CD4-positive, alpha-beta T cell (primary cell): ENCODE measurements at regions of chr20 and their contacts with region 1.

Region 1: GRCh38 chr20:29878281-29878741 is 1379.2 kb upstream of the DEFB115 start:
- DNase-seq: peak in 2 of 14 experiments; percentile 7 to 25
- ATAC-seq: no peak
- H3K4me3 ChIP-seq: no peak overlapping the region
- H3K4me3 Mint-ChIP-seq: peak overlapping the region; percentile 54
- H3K27ac ChIP-seq: no peak overlapping the region
- H3K27ac Mint-ChIP-seq: no peak overlapping the region
- H3K4me1 ChIP-seq: no peaks in the 10 kb centered on the region
- H3K4me1 Mint-ChIP-seq: no peaks in the 10 kb centered on the region
- H3K27me3 ChIP-seq: no peaks in the 10 kb centered on the region
- H3K27me3 Mint-ChIP-seq: no peaks in the 10 kb centered on the region
- CTCF ChIP-seq: no peak

Region 2: GRCh38 chr20:29119141-29119540 is 759.2 kb before region 1 on chr20:
- CTCF ChIA-PET with region 1: no interaction called
- POLR2A ChIA-PET with region 1: no interaction called
- intact Hi-C with region 1: loop called in 1 of 2 experiments (anchors 10 kb)
- DNase-seq: no peak
- ATAC-seq: no peak
- H3K4me3 ChIP-seq: no peak overlapping the region
- H3K4me3 Mint-ChIP-seq: no peak overlapping the region
- H3K27ac ChIP-seq: no peak overlapping the region
- H3K27ac Mint-ChIP-seq: no peak overlapping the region
- H3K4me1 ChIP-seq: no peaks in the 10 kb centered on the region
- H3K4me1 Mint-ChIP-seq: no peaks in the 10 kb centered on the region
- H3K27me3 ChIP-seq: no peaks in the 10 kb centered on the region
- H3K27me3 Mint-ChIP-seq: no peaks in the 10 kb centered on the region
- CTCF ChIP-seq: no peak